ENCODE measurements at regions of chr13 and their contacts with region 1.

Region 1: DNA sequence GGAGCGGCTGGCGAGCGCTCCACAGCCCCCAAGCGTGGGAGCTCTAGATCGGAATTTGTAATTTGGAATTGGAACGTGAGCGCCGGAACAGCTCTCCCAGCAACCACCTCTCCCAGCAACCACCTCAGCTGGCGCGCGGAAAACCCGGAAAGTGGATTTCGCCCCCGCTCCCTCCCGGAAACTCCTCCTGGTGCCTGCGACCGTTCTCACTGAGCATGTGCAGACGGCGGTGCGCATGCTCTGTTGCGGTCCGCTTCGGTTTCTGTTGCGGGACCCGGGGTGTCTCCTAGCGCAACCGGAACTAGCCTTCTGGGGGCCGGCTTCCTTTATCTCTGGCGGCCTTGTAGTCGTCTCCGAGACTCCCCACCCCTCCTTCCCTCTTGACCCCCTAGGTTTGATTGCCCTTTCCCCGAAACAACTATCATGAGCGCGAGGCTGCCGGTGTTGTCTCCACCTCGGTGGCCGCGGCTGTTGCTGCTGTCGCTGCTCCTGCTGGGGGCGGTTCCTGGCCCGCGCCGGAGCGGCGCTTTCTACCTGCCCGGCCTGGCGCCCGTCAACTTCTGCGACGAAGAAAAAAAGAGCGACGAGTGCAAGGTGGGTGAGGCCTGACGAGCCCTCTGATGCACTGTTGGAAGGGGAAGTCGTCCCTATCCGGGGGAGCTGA is at the start of gene TM9SF2:
- DNase-seq: peak; percentile 94 to 98 (median 96)
- ATAC-seq: peak; percentile 70
- H3K4me3 ChIP-seq: peak within 1 kb of the TSS; percentile 93
- H3K4me3 Mint-ChIP-seq: peak within 1 kb of the TSS; percentile 94 to 100 (median 97)
- H3K27ac ChIP-seq: peak within 1 kb of the TSS; percentile 94
- H3K27ac Mint-ChIP-seq: peak within 1 kb of the TSS; percentile 96 to 99 (median 98)
- H3K4me1 ChIP-seq: peaks cover 47 to 65% of the 10 kb centered on the region in 2 donors
- H3K4me1 Mint-ChIP-seq: peaks cover 57 to 93% (median 85%) of the 10 kb centered on the region in 7 donors
- H3K27me3 ChIP-seq: no peaks in the 10 kb centered on the region
- H3K27me3 Mint-ChIP-seq: peaks cover 0 to 4% (median 0%) of the 10 kb centered on the region in 5 donors
- total RNA-seq, gene TM9SF2: 38.0 to 76.3 (median 53.1) TPM

Region 2: GRCh38 chr13:98454389-98454881 is 1046.9 kb before region 1 on chr13:
- CTCF ChIA-PET with region 1: no interaction called
- POLR2A ChIA-PET with region 1: no interaction called
- intact Hi-C with region 1: no loop called
- DNase-seq: no peak
- ATAC-seq: no peak
- H3K4me3 ChIP-seq: no peak overlapping the region
- H3K4me3 Mint-ChIP-seq: no peak overlapping the region
- H3K27ac ChIP-seq: no peak overlapping the region
- H3K27ac Mint-ChIP-seq: peak overlapping the region in 7 of 9 donors; percentile 9 to 89 (median 44)
- H3K4me1 ChIP-seq: peaks cover 0 to 12% of the 10 kb centered on the region in 2 donors
- H3K4me1 Mint-ChIP-seq: peaks cover 9 to 33% (median 21%) of the 10 kb centered on the region in 7 donors
- H3K27me3 ChIP-seq: no peaks in the 10 kb centered on the region
- H3K27me3 Mint-ChIP-seq: no peaks in the 10 kb centered on the region

Region 3: DNA sequence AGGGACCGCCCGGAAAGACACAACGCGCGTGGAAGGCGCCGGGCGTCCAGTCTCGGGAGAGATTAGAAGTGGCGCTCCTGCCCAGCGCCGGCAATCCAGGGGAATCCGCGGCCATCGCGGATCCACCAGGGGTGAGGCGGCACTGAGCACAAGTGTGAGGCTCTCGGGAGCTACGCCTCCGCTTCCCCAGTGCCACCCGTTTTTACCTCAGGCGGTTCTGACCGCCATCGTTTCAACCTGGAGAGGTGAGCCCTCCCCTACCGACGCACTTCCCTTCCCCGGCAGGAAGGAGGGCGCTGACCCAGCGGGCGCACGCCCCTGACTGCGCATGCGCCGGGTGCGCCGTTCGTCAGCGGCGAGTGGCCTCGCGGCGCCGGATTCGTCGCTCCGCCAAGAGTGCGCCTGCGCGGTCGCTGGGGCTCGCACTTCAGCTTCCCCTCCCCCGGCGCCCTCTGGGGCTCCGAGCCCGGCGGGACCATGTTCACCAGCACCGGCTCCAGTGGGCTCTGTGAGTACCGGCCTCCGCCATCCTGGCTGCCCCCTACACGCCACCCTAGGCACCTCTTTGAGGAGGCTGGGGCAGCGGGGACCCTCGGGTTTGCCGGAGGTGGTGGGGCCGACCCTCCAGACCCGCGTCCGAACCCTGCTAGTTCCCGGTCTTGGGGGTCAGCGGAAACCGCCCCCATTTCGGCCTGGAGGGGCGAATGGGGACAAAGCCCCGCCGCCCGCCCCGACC is 300.7 kb before region 1 on chr13 and contains the start of gene UBAC2:
- CTCF ChIA-PET with region 1: interaction called, 3 read pairs
- POLR2A ChIA-PET with region 1: interaction called, 7 read pairs
- intact Hi-C with region 1: loop called (anchors 1 kb)
- DNase-seq: peak; percentile 95 to 99 (median 98)
- ATAC-seq: peak; percentile 88
- H3K4me3 ChIP-seq: peak within 1 kb of the TSS; percentile 74
- H3K4me3 Mint-ChIP-seq: peak within 1 kb of the TSS; percentile 90 to 100 (median 97)
- H3K27ac ChIP-seq: peak within 1 kb of the TSS; percentile 99
- H3K27ac Mint-ChIP-seq: peak within 1 kb of the TSS; percentile 92 to 98 (median 95)
- H3K4me1 ChIP-seq: peaks cover 38 to 51% of the 10 kb centered on the region in 2 donors
- H3K4me1 Mint-ChIP-seq: peaks cover 42 to 74% (median 61%) of the 10 kb centered on the region in 7 donors
- H3K27me3 ChIP-seq: no peaks in the 10 kb centered on the region
- H3K27me3 Mint-ChIP-seq: peaks cover 0 to 2% (median 0%) of the 10 kb centered on the region in 5 donors
- total RNA-seq, gene UBAC2: 63.3 to 114 (median 90.2) TPM

Region 4: GRCh38 chr13:99307648-99308339 is 193.5 kb before region 1 on chr13:
- CTCF ChIA-PET with region 1: no interaction called
- POLR2A ChIA-PET with region 1: interaction called, 3 read pairs
- intact Hi-C with region 1: loop called (anchors 2 to 5 kb)
- DNase-seq: peak in 2 of 9 donors; percentile 44 to 69
- ATAC-seq: peak; percentile 40
- H3K4me3 ChIP-seq: peak overlapping the region; percentile 89
- H3K4me3 Mint-ChIP-seq: peak overlapping the region; percentile 89 to 100 (median 94)
- H3K27ac ChIP-seq: peak overlapping the region; percentile 88
- H3K27ac Mint-ChIP-seq: peak overlapping the region; percentile 81 to 99 (median 95)
- H3K4me1 ChIP-seq: peaks cover 49 to 50% of the 10 kb centered on the region in 2 donors
- H3K4me1 Mint-ChIP-seq: peaks cover 56 to 84% (median 77%) of the 10 kb centered on the region in 7 donors
- H3K27me3 ChIP-seq: no peaks in the 10 kb centered on the region
- H3K27me3 Mint-ChIP-seq: no peaks in the 10 kb centered on the region

Region 5: DNA sequence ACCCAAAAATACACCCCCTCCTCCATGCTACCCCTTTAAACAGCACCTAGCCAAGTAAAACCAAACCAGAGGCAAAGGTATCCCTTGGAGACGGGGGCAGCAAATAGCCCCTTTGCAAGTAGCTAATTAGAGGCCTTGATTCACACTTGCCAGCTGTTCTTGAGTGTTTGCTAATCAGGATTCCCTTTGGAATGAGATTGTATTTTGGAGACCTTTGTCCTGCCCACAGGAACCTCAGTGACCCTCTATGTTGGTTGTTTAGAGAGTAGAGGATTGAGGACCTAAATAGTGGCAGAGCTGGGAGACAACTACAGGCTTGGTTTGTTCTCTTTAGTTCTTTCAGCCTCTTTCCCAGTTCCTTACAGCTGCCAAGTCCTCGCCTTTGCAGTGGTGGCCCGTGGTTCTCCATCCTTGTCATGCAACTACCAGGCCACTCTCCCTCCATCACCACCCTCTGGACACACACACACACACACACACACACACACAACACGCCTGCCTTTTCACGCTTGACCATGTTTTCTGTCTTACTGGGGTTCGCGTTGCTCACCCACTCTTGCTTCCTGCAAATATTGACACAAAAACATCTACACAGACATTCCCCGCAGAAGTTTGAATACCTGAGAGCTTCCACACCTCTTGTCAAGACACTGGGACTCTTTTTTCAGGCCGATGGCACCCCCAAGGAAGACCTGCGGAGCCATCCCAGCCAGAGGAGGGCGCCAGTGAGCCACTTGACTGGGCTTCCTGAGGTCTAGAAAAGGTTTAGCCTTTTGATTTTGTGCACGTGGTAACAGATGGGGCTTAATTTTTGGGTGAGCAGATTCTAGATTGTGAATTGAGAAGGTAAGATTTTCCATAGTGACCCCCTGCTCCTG is 114.2 kb before region 1 on chr13:
- CTCF ChIA-PET with region 1: interaction called, 4 read pairs
- POLR2A ChIA-PET with region 1: no interaction called
- intact Hi-C with region 1: loop called in 1 of 2 experiments (anchors 1 kb)
- DNase-seq: peak; percentile 74 to 89 (median 84)
- ATAC-seq: peak; percentile 65
- H3K4me3 ChIP-seq: no peak overlapping the region
- H3K4me3 Mint-ChIP-seq: peak overlapping the region in 9 of 10 donors; percentile 2 to 73 (median 62)
- H3K27ac ChIP-seq: peak overlapping the region; percentile 85
- H3K27ac Mint-ChIP-seq: peak overlapping the region; percentile 44 to 99 (median 98)
- H3K4me1 ChIP-seq: peaks cover 59 to 65% of the 10 kb centered on the region in 2 donors
- H3K4me1 Mint-ChIP-seq: peaks cover 35 to 83% (median 76%) of the 10 kb centered on the region in 7 donors
- H3K27me3 ChIP-seq: no peaks in the 10 kb centered on the region
- H3K27me3 Mint-ChIP-seq: no peaks in the 10 kb centered on the region

Region 6: DNA sequence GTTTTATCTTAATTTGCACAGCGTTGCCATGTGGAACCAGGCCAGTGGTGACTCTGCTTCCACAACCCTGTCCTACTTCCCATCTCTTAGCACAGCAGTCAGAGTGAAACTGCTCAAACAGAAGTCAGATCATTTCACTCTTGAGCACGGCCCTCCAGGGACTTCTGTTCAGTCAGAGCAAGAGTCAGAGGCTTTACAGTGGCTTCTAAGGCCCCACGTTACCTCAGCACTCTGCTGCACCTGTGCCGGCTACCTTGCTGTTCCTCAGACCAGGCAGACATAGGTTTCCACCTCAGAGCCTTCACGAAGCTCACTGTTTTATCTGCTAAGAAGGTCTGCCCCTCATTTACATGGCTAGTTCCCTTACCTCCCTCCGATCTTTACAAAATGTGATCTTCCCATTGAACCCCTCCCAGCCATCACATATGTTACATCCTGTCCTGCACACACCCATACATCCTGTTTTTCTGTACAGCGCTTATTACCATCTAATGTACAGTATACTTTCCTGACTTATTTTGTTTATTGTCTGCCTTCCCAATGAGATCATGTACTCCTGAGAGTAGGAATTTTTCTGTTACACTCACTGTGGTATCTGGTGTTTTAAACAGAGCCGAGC is 41.6 kb after region 1 on chr13:
- CTCF ChIA-PET with region 1: no interaction called
- POLR2A ChIA-PET with region 1: interaction called, 6 read pairs
- intact Hi-C with region 1: loop called (anchors 2 kb)
- DNase-seq: peak in 7 of 9 donors; percentile 32 to 54 (median 45)
- ATAC-seq: peak; percentile 82
- H3K4me3 ChIP-seq: peak overlapping the region; percentile 7
- H3K4me3 Mint-ChIP-seq: peak overlapping the region; percentile 56 to 78 (median 64)
- H3K27ac ChIP-seq: peak overlapping the region; percentile 54
- H3K27ac Mint-ChIP-seq: peak overlapping the region; percentile 80 to 97 (median 89)
- H3K4me1 ChIP-seq: peaks cover 16 to 25% of the 10 kb centered on the region in 2 donors
- H3K4me1 Mint-ChIP-seq: peaks cover 29 to 62% (median 53%) of the 10 kb centered on the region in 7 donors
- H3K27me3 ChIP-seq: no peaks in the 10 kb centered on the region
- H3K27me3 Mint-ChIP-seq: no peaks in the 10 kb centered on the region

Region 7: DNA sequence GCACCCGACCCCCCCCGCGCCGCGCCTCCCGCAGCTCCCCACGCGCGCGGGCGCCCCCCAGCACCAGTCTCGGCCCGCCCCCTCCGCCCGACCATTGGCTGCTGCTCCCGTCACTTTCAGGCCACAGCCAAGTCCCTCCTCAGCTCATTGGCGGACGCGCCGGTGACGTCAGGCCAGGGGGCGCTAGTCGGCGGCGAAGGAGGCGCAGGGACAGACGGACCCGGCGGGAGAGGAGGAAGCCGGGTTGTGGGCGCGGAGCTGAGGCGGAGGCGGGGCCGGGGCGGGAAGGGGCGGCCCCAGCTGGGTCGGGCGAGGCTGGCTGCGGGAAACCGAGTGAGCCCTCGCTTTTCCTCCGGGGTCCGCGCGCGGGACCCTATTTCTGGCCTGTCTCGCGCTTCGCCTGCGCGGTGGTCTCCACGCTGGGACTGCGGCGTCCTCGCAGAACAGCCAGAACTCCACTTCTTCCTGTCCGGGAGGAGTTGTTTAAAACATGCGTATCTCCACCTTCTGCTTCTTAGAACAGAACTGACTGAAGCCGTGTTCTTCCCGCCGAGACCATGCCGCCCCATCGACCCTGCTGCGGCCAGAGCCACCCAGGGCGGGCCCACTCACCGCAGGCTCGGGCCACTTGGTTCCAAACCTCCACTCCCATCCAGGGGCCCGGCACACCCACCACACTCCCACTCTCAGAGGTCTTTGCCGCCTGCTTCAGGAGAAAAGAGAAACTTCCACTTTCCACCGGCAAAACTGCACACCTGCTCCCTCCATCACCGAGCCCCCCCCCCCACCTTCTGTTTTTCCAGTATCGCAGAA is 1173.7 kb after region 1 on chr13:
- CTCF ChIA-PET with region 1: no interaction called
- POLR2A ChIA-PET with region 1: no interaction called
- intact Hi-C with region 1: loop called (anchors 1 to 2 kb)
- DNase-seq: peak; percentile 97 to 100 (median 99)
- ATAC-seq: peak; percentile 96
- H3K4me3 ChIP-seq: peak overlapping the region; percentile 93
- H3K4me3 Mint-ChIP-seq: peak overlapping the region; percentile 86 to 95 (median 90)
- H3K27ac ChIP-seq: peak overlapping the region; percentile 84
- H3K27ac Mint-ChIP-seq: peak overlapping the region; percentile 64 to 91 (median 86)
- H3K4me1 ChIP-seq: peaks cover 7 to 9% of the 10 kb centered on the region in 2 donors
- H3K4me1 Mint-ChIP-seq: peaks cover 17 to 38% (median 30%) of the 10 kb centered on the region in 7 donors
- H3K27me3 ChIP-seq: no peaks in the 10 kb centered on the region
- H3K27me3 Mint-ChIP-seq: peaks cover 0 to 20% (median 0%) of the 10 kb centered on the region in 5 donors